ENCODE measurements at regions of chr2 and their contacts with region 1.

Region 1: DNA sequence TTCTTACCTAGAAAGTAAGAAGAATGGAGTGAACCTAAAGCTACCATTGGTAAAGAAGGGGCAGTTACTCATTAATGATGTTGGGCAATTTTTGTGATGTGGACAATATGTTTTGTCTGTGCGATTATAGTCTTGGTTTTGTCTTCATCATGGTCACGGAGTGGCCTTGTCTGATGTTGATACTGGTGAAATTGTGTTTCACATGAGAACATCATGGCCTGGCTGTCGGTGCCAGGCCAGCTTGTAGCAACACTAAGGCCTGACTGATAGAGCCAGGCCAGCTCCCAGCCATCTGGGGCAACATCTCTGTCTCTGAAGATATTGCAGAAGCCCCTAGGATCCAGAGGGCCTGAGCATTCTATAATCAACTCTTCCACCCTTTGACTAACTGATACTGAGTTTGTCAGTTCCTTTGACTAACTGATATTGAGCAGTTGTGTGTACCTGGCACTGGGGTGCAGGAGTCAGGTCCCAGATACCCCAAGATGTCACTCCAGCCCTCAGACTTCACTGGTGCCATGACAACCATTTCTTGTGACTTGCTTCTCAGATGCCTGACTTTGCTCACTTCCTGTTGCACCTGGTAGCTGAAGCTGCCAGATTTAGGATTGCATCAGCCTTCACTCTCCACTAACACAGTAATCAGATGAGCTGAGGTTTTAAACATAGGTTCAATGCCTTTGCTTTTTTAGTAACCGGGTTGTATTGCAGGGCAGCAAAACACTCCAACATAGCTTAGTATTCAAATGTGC is 62.5 kb downstream of the RPIA start:
- DNase-seq: peak; percentile 62
- H3K4me3 Mint-ChIP-seq: no peak overlapping the region
- H3K27ac Mint-ChIP-seq: peak overlapping the region; percentile 91
- H3K4me1 Mint-ChIP-seq: peaks cover 24% of the 10 kb centered on the region
- H3K27me3 Mint-ChIP-seq: no peaks in the 10 kb centered on the region

Region 2: DNA sequence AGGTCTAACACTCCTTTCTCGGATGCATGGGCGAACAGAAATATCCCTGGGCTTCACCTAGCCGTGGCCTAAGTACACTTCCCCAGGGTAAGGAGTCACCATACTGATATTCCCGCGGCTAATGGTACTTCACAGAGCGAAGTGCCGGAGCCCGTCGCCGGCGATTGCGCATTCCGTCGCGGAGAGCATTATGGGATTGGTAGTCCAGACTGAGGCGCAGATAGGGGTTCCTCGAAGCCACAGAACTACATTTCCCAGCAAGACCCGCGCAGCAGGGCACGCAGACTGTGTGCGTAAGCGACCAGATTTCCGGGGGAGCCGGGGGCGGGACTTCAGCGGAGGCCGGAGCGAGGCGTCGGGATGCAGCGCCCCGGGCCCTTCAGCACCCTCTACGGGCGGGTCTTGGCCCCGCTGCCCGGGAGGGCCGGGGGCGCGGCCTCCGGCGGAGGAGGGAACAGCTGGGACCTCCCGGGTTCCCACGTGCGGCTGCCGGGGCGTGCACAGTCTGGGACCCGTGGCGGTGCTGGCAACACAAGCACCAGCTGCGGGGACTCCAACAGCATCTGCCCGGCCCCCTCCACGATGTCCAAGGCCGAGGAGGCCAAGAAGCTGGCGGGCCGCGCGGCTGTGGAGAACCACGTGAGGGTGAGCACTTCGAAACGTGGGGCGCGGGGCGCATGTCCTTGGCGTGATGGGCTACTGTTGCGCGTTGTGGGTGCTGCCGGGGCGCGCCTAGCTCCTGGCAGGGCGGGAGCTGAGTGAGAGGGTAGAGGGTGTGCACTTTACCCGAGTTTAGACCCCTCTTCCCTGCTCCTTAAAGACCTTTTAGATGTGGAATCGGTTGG is 62.4 kb before region 1 on chr2 and contains the start of gene RPIA:
- CTCF ChIA-PET with region 1: no interaction called
- POLR2A ChIA-PET with region 1: no interaction called
- intact Hi-C with region 1: loop called (anchors 2 kb)
- DNase-seq: peak; percentile 99
- H3K4me3 Mint-ChIP-seq: peak within 1 kb of the TSS; percentile 91
- H3K27ac Mint-ChIP-seq: peak within 1 kb of the TSS; percentile 89
- H3K4me1 Mint-ChIP-seq: peaks cover 34% of the 10 kb centered on the region
- H3K27me3 Mint-ChIP-seq: no peaks in the 10 kb centered on the region
- total RNA-seq, gene RPIA: 50.7 to 52.7 TPM

Region 3: GRCh38 chr2:88739985-88740600 is 13.9 kb before region 1 on chr2:
- CTCF ChIA-PET with region 1: interaction called, 19 read pairs
- POLR2A ChIA-PET with region 1: no interaction called
- intact Hi-C with region 1: no loop called
- DNase-seq: peak; percentile 80
- H3K4me3 Mint-ChIP-seq: no peak overlapping the region
- H3K27ac Mint-ChIP-seq: no peak overlapping the region
- H3K4me1 Mint-ChIP-seq: peaks cover 18% of the 10 kb centered on the region
- H3K27me3 Mint-ChIP-seq: no peaks in the 10 kb centered on the region

Region 4: DNA sequence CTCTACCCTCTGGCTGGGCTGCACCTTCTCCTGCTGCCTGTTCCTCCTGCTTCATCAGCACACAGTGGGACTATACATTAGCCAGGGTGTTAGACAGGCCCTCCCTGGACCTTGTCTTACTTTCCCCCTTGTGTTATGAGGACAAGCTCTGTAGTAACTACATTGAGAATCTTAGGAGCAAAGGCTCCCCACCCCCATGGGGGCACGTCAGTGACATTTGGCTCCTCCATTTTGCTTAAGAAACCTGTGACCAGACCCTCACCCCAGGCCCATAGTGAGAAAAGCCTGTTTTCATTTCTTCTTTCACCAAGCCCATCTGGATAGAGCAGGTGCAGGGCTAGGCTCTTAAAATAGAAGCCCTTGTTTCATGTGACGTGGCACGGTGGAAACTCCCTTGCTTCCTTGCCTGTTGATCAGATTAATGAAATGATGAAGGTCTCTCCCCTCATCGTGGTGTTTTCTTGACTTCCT is 84.2 kb after region 1 on chr2:
- CTCF ChIA-PET with region 1: no interaction called
- POLR2A ChIA-PET with region 1: no interaction called
- intact Hi-C with region 1: no loop called
- DNase-seq: no peak
- H3K4me3 Mint-ChIP-seq: no peak overlapping the region
- H3K27ac Mint-ChIP-seq: no peak overlapping the region
- H3K4me1 Mint-ChIP-seq: no peaks in the 10 kb centered on the region
- H3K27me3 Mint-ChIP-seq: peaks cover 2% of the 10 kb centered on the region

Region 5: DNA sequence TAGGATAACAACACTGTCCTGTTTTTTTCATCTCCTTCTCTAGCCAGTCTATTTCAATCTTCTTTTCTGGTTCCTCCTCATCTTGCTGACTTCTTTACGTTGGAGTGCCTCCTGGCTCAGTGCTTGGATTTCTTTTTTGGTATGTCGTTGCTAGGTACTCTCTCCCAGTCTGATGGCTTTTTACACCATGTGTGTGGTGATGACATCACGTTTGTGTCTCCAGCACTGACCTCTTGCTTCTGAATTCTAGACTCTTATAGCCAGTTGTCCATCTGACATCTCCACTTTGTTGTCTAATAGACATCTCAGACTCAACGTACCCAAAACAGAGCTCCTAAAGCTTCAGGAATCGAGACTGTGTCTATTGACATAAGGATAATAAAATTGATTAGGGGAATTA is 94.6 kb after region 1 on chr2:
- CTCF ChIA-PET with region 1: no interaction called
- POLR2A ChIA-PET with region 1: no interaction called
- intact Hi-C with region 1: no loop called
- DNase-seq: no peak
- H3K4me3 Mint-ChIP-seq: no peak overlapping the region
- H3K27ac Mint-ChIP-seq: no peak overlapping the region
- H3K4me1 Mint-ChIP-seq: no peaks in the 10 kb centered on the region
- H3K27me3 Mint-ChIP-seq: peaks cover 16% of the 10 kb centered on the region

Measured in activated CD4-positive, alpha-beta memory T cell treated with anti-CD3 and anti-CD28 coated beads for 36 hours (primary cell).